ENCODE measurements at regions of chr7 and their contacts with region 1.

Region 1: GRCh38 chr7:149497456-149498261 is at the start of gene ZNF746:
- DNase-seq: peak; percentile 58 to 92 (median 74)
- ATAC-seq: peak; percentile 92
- H3K4me3 ChIP-seq: peak within 1 kb of the TSS; percentile 73
- H3K4me3 Mint-ChIP-seq: peak within 1 kb of the TSS; percentile 96
- H3K27ac ChIP-seq: peak within 1 kb of the TSS in 1 of 2 donors; percentile 43
- H3K27ac Mint-ChIP-seq: peak within 1 kb of the TSS; percentile 96
- H3K4me1 ChIP-seq: peaks cover 25% of the 10 kb centered on the region
- H3K4me1 Mint-ChIP-seq: peaks cover 27% of the 10 kb centered on the region
- H3K27me3 ChIP-seq: no peaks in the 10 kb centered on the region
- H3K27me3 Mint-ChIP-seq: no peaks in the 10 kb centered on the region
- CTCF ChIP-seq: peak; percentile 27
- total RNA-seq, gene ZNF746: 28.4 to 30.3 TPM

Region 2: GRCh38 chr7:149028346-149029109 is 469.1 kb before region 1 on chr7 and contains the start of gene PDIA4:
- CTCF ChIA-PET with region 1: no interaction called
- POLR2A ChIA-PET with region 1: no interaction called
- intact Hi-C with region 1: loop called in 1 of 2 experiments (anchors 5 kb)
- DNase-seq: peak; percentile 96 to 100 (median 99)
- ATAC-seq: peak; percentile 88
- H3K4me3 ChIP-seq: peak within 1 kb of the TSS; percentile 87
- H3K4me3 Mint-ChIP-seq: peak within 1 kb of the TSS; percentile 90
- H3K27ac ChIP-seq: peak within 1 kb of the TSS; percentile 70 to 71
- H3K27ac Mint-ChIP-seq: peak within 1 kb of the TSS; percentile 91
- H3K4me1 ChIP-seq: peaks cover 40% of the 10 kb centered on the region
- H3K4me1 Mint-ChIP-seq: peaks cover 54% of the 10 kb centered on the region
- H3K27me3 ChIP-seq: no peaks in the 10 kb centered on the region
- H3K27me3 Mint-ChIP-seq: no peaks in the 10 kb centered on the region
- CTCF ChIP-seq: no peak
- total RNA-seq, gene PDIA4: 19.5 to 19.9 TPM

Region 3: GRCh38 chr7:149195180-149196150 is 302.2 kb before region 1 on chr7 and contains the start of gene ZNF282:
- CTCF ChIA-PET with region 1: no interaction called
- POLR2A ChIA-PET with region 1: no interaction called
- intact Hi-C with region 1: loop called in 1 of 2 experiments (anchors 5 kb)
- DNase-seq: peak; percentile 32 to 83 (median 59)
- ATAC-seq: peak; percentile 79
- H3K4me3 ChIP-seq: peak within 1 kb of the TSS; percentile 90
- H3K4me3 Mint-ChIP-seq: peak within 1 kb of the TSS; percentile 96
- H3K27ac ChIP-seq: peak within 1 kb of the TSS; percentile 16 to 47
- H3K27ac Mint-ChIP-seq: peak within 1 kb of the TSS; percentile 89
- H3K4me1 ChIP-seq: peaks cover 25% of the 10 kb centered on the region
- H3K4me1 Mint-ChIP-seq: peaks cover 36% of the 10 kb centered on the region
- H3K27me3 ChIP-seq: no peaks in the 10 kb centered on the region
- H3K27me3 Mint-ChIP-seq: no peaks in the 10 kb centered on the region
- CTCF ChIP-seq: peak; percentile 54
- total RNA-seq, gene ZNF282: 13.3 to 15.6 TPM

Region 4: DNA sequence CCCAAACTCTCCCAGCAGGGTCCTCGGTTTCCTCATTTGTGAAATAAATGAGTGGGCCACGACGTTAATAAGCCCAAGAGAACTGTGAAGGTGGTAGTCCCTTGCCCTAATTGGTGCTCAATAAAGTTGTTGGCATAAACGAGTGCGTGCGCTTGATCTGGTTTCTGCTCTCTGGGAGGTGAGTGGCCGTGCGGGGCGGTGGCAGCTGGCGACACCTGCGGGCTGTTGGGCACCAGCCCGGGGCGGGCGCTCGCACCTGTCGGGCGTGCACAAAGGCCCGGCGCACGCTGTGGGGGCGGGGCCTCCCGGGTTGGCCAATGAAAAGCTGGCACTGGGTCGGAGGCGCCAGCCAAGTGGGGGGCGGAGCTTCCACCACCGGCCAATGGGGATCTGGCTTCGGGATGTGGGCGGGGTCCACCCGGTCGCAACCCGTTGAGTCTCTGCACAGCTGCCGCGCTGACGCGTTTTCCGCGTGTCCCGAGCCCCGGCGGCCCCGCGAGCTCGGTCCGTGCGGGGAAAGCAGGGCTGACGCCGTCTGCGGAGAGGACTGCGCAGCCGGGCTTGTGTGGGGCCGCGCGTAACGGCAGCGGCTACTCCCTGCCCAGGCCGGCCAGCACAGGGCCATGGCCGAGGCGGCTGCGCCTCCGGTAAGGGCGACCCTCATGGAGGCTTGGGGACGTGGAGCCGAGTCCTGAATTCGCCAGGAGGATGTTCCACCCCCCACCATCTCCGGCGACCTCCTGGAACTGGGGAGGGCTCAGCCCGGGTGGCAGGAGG is 212.6 kb before region 1 on chr7:
- CTCF ChIA-PET with region 1: no interaction called
- POLR2A ChIA-PET with region 1: no interaction called
- intact Hi-C with region 1: loop called in 1 of 2 experiments (anchors 5 kb)
- DNase-seq: peak; percentile 96 to 99 (median 98)
- ATAC-seq: peak; percentile 93
- H3K4me3 ChIP-seq: peak overlapping the region; percentile 65
- H3K4me3 Mint-ChIP-seq: peak overlapping the region; percentile 92
- H3K27ac ChIP-seq: peak overlapping the region; percentile 21 to 63
- H3K27ac Mint-ChIP-seq: peak overlapping the region; percentile 90
- H3K4me1 ChIP-seq: peaks cover 47% of the 10 kb centered on the region
- H3K4me1 Mint-ChIP-seq: peaks cover 44% of the 10 kb centered on the region
- H3K27me3 ChIP-seq: no peaks in the 10 kb centered on the region
- H3K27me3 Mint-ChIP-seq: no peaks in the 10 kb centered on the region
- CTCF ChIP-seq: peak; percentile 13

Region 5: DNA sequence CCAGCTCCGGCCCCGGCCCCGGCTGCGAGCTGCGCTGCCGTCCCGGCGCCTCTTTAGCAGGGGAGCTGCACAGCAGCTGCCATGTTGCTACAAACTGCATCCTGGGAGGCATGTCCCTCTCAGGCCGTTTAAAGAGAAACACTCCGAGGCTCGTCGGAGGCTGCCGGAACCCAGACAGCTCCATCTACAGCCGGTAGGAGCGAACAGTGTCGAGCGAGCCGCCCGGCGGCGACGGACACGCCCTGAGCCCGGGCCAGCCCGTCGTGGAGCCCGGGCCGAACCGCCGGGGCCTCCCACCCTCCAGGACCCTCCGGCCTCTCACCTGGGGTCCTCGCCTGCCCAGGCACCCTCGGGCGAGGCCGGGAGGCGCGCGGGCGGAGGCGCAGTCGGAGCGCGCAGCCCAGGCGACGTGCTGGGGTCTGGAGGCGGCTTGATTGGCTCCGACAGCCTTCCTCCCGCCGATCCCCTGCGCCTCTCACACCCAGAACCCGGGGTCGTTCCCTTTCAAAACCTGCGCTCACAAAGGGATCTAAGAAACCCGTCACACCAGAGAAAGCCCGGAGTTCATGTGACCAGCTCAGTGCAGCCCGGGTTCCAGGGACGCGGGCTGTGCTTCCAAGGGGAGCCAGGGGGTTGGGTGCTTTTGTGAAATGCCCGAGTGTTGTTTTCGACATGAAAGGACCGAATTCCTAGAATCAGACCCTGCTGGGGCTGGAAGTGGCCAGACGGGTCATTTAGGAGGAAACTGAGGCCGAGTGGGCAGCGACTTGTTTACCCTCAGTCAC is 37.0 kb before region 1 on chr7 and contains the start of gene ZNF777:
- CTCF ChIA-PET with region 1: interaction called, 12 read pairs
- POLR2A ChIA-PET with region 1: no interaction called
- intact Hi-C with region 1: loop called in 1 of 2 experiments (anchors 1 kb)
- DNase-seq: peak; percentile 70 to 92 (median 78)
- ATAC-seq: peak; percentile 99
- H3K4me3 ChIP-seq: peak within 1 kb of the TSS; percentile 74
- H3K4me3 Mint-ChIP-seq: peak within 1 kb of the TSS; percentile 92
- H3K27ac ChIP-seq: peak within 1 kb of the TSS in 1 of 2 donors; percentile 52
- H3K27ac Mint-ChIP-seq: peak within 1 kb of the TSS; percentile 70
- H3K4me1 ChIP-seq: peaks cover 25% of the 10 kb centered on the region
- H3K4me1 Mint-ChIP-seq: peaks cover 33% of the 10 kb centered on the region
- H3K27me3 ChIP-seq: peaks cover 0 to 5% of the 10 kb centered on the region in 2 experiments
- H3K27me3 Mint-ChIP-seq: peaks cover 15% of the 10 kb centered on the region
- CTCF ChIP-seq: peak; percentile 49
- total RNA-seq, gene ZNF777: 14.5 to 14.8 TPM

Region 6: GRCh38 chr7:149771721-149772240 is 274.1 kb after region 1 on chr7:
- CTCF ChIA-PET with region 1: no interaction called
- POLR2A ChIA-PET with region 1: no interaction called
- intact Hi-C with region 1: loop called in 1 of 2 experiments (anchors 5 kb)
- DNase-seq: peak; percentile 73 to 93 (median 86)
- ATAC-seq: peak; percentile 87
- H3K4me3 ChIP-seq: peak overlapping the region; percentile 67
- H3K4me3 Mint-ChIP-seq: peak overlapping the region; percentile 84
- H3K27ac ChIP-seq: no peak overlapping the region
- H3K27ac Mint-ChIP-seq: no peak overlapping the region
- H3K4me1 ChIP-seq: peaks cover 31% of the 10 kb centered on the region
- H3K4me1 Mint-ChIP-seq: peaks cover 20% of the 10 kb centered on the region
- H3K27me3 ChIP-seq: no peaks in the 10 kb centered on the region
- H3K27me3 Mint-ChIP-seq: no peaks in the 10 kb centered on the region
- CTCF ChIP-seq: no peak